PC-9 (cell line): ENCODE measurements at regions of chr3 and their contacts with region 1.

Region 1: DNA sequence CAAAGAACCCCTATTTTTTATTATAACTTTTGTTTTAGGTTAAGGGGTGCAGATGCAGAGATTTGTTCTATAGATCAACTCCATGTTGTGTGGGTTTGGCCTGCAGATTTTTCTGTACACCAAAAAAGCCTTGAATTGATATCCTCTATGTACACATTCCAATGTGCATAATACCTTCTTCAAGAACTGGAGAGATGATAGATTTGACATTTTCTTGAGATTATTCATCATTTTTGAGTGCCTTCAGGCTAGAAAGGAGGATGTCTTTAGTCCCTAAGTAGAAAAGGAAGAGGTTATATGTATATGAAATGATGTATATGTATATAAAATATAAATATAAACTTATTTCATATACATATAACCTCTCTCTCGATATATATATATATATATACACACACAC is 1190.0 kb upstream of the ALCAM start:
- DNase-seq: no peak
- H3K4me3 ChIP-seq: no peak overlapping the region
- H3K27ac ChIP-seq: no peak overlapping the region
- H3K4me1 ChIP-seq: no peaks in the 10 kb centered on the region
- H3K27me3 ChIP-seq: no peaks in the 10 kb centered on the region
- CTCF ChIP-seq: no peak

Region 2: DNA sequence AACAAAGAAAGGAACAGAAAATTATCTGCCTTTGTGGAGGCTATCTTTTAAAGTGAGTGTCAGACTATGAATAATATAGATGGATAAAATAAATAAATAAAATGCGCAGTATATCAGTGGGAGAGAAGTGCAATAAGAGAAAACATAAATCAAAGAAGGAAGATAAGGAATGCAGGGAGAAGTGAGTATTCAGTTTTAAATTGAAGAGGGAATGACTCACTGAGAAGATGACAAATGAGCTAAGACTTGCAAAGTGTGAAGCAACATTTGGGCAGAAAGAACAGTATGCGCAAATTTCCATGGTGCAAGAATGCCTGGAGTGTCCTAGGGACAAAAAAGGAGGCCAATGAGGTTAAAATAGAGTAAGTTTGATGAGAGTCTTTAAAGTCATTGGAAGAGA is 110.0 kb before region 1 on chr3:
- CTCF ChIA-PET with region 1: no interaction called
- POLR2A ChIA-PET with region 1: no interaction called
- intact Hi-C with region 1: no loop called
- DNase-seq: no peak
- H3K4me3 ChIP-seq: no peak overlapping the region
- H3K27ac ChIP-seq: no peak overlapping the region
- H3K4me1 ChIP-seq: no peaks in the 10 kb centered on the region
- H3K27me3 ChIP-seq: no peaks in the 10 kb centered on the region
- CTCF ChIP-seq: no peak

Region 3: GRCh38 chr3:105322570-105323273 is 1146.0 kb after region 1 on chr3:
- CTCF ChIA-PET with region 1: no interaction called
- POLR2A ChIA-PET with region 1: interaction called, 11 read pairs
- intact Hi-C with region 1: no loop called
- DNase-seq: no peak
- H3K4me3 ChIP-seq: no peak overlapping the region
- H3K27ac ChIP-seq: no peak overlapping the region
- H3K4me1 ChIP-seq: no peaks in the 10 kb centered on the region; the same call in 1 of the 2 replicates
- H3K27me3 ChIP-seq: no peaks in the 10 kb centered on the region
- CTCF ChIP-seq: no peak